Mammary epithelial cell (primary cell): ENCODE measurements at regions of chr21 and their contacts with region 1.

Region 1: DNA sequence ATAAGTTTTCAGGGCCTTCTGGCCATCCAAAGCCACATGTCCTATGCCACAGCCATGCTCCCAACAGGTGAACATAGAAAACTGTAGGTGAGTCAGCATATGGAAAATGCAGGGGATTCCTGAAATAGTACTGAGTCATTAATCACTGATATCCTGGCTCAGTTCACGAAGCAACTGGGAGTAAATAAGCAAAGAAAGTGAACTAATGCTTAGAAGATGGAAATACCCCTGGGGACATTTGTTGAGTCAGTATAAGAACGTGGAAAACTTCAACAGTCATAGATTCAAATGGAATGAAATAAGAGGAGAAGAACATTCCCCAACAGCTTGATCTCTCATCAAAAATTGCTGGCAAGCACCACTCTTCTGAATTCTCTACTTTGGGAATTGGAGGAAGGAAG is 148.9 kb upstream of the RUNX1 start:
- DNase-seq: peak; percentile 99
- H3K4me3 ChIP-seq: no peak overlapping the region
- H3K27ac ChIP-seq: peak overlapping the region; percentile 96
- H3K4me1 ChIP-seq: peaks cover 23% of the 10 kb centered on the region
- H3K27me3 ChIP-seq: no peaks in the 10 kb centered on the region
- CTCF ChIP-seq: no peak

Region 2: DNA sequence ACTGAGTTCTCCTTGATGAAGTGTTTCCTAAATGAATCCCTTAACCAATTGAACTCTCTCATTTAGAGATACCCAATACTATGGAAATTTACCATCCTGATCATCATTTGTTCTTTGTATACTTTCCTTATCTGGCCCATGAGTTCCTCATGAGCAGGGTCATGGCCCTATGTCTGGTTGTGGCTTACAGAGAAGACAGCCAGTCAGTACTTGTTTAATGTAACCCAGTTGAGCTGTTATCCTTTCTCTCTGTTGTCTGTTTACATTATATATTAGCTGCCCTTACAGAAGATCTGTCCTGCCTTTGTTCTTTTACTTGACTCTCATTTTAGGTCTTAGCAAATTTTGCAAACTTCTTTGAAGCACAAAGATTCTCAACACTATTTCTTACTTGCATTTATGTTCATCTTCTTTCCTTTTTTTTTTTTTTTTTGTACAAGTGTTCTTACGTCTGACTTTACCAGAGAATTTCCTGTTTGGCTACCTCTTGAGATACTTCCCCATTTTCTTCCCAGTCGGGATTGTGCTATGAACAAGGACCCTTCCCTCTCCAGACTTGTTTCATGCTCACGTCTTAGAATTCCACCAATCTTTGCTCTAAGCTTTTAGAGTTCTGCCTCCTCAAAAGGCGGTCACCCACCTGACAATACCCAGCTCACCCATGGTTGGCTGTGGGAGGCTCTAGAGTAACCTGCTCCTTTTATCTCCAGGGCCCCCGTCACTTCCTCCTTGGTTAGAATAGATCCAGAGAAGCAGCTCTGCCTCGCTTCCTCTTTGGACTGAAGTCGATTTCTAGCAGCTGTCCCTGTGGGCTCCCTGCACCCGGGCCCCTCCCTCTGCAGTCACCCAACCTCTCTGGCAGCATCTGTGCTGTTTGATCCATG is 95.3 kb before region 1 on chr21:
- CTCF ChIA-PET with region 1: no interaction called
- dilution Hi-C with region 1: no loop called
- in situ Hi-C with region 1: no loop called
- intact Hi-C with region 1: no loop called
- DNase-seq: peak; percentile 31
- H3K4me3 ChIP-seq: no peak overlapping the region
- H3K27ac ChIP-seq: no peak overlapping the region
- H3K4me1 ChIP-seq: peaks cover 5% of the 10 kb centered on the region
- H3K27me3 ChIP-seq: no peaks in the 10 kb centered on the region
- CTCF ChIP-seq: no peak

Region 3: GRCh38 chr21:35375115-35375514 is 177.1 kb after region 1 on chr21:
- CTCF ChIA-PET with region 1: no interaction called
- dilution Hi-C with region 1: no loop called
- in situ Hi-C with region 1: no loop called
- intact Hi-C with region 1: loop called (anchors 1 kb)
- DNase-seq: peak; percentile 77
- H3K4me3 ChIP-seq: no peak overlapping the region
- H3K27ac ChIP-seq: peak overlapping the region; percentile 42
- H3K4me1 ChIP-seq: peaks cover 37% of the 10 kb centered on the region
- H3K27me3 ChIP-seq: no peaks in the 10 kb centered on the region
- CTCF ChIP-seq: no peak